Body of pancreas (tissue), 4 donors: ENCODE measurements at regions of chr5 and their contacts with region 1.

Region 1: DNA sequence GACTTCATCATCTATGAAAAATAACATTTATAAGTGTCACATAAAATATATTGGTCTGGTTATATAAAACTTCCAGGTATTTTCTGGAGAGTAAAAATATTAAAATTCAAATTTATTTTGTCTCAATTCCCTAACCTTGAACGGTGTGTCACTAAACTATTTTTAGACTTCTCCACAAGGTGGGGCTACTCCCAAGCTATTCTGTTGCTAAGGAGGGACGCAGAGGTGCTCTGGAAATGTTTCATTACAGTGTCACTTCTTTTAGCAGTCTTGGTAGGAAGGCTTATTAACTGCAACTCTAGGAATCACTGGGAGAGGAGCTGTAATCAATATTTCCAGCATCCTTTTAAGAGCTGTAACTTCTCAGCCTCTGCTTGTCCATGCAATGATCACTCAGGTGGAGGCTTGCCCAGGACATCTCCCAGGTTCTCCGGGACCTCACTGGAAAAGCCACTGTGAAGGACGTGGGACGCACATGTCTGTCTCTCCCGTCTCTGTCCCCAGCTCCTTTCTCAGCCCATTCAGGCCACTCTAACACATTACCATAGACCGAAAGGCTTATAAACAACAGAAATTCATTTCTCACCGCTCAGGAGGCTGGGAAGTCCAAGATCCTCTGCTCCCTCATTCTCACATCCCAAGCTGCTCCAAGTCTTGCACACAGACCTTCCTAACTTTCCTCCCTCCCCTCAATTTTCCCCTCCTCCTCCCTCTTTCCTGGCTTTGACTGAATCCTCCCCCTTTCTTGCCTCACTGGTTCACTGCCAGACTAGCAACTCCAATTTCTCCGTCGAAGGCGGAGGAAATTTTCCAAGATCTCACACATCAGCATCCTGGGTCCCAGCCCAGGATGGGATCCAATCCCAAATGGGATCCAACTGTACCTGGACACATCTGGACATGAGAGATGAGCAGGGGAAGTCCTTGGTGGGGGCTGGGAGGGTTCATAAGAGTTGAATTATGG is 32.7 kb upstream of the DNAH5 start:
- DNase-seq: peak in 1 of 4 donors; percentile 8
- ATAC-seq: peak; percentile 62
- H3K4me3 ChIP-seq: no peak overlapping the region
- H3K27ac ChIP-seq: no peak overlapping the region
- H3K4me1 ChIP-seq: no peaks in the 10 kb centered on the region
- H3K27me3 ChIP-seq: no peaks in the 10 kb centered on the region
- CTCF ChIP-seq: peak in 6 of 7 experiments; percentile 27 to 52 (median 38)
- POLR2A ChIP-seq: no peak

Region 2: DNA sequence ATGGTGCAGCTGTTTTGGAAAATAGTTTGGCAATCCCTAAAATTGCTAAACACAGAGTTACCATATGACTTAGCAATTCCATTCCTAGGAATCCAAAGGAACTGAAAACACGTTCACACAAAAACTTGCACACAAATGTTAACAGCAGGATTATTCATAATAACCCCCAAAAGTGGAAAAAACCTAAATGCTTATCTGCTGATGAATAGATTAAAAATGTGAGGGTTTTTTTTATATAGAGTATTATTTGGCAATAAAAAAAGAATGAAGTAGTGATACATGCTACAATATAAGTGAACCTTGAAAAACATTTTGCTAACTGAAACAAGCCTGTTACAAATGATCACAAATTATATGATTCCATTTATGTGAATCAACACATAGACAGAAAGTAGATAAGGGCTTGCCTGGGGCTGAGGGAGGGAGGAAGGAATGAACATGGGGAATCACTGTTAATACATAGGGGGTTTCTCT is 120.9 kb after region 1 on chr5:
- intact Hi-C with region 1: loop called (anchors 10 kb)
- DNase-seq: no peak
- ATAC-seq: no peak
- H3K4me3 ChIP-seq: no peak overlapping the region
- H3K27ac ChIP-seq: no peak overlapping the region
- H3K4me1 ChIP-seq: no peaks in the 10 kb centered on the region
- H3K27me3 ChIP-seq: no peaks in the 10 kb centered on the region
- CTCF ChIP-seq: no peak
- POLR2A ChIP-seq: no peak